ENCODE measurements at regions of chr7 and their contacts with region 1.

Region 1: DNA sequence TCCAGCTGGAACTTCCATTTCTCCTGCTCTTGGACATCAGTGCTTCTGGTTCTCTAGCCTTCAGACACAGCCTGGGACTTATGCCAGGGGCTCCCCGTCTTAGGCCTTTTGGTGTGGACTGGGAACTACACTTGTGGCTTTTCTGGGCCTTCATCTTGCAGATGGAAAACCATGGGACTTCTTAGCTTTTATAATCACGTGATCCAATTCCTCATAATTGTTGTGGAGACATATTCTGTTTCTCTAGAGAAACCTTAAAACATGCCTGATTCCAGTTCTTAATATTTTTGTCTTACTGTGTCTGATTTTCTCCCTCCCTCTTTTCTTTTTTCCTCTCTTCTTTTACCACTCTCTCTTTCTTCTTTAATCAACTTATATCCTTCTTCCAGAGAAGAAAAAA is 224.2 kb upstream of the FOXP2 start:
- DNase-seq: no peak
- ATAC-seq: no peak
- H3K4me3 Mint-ChIP-seq: no peak overlapping the region
- H3K27ac Mint-ChIP-seq: no peak overlapping the region
- H3K4me1 Mint-ChIP-seq: no peaks in the 10 kb centered on the region
- H3K27me3 Mint-ChIP-seq: peaks cover 3% of the 10 kb centered on the region

Region 2: GRCh38 chr7:113188396-113188795 is 1002.0 kb before region 1 on chr7:
- CTCF ChIA-PET with region 1: no interaction called
- POLR2A ChIA-PET with region 1: no interaction called
- intact Hi-C with region 1: loop called in 1 of 2 experiments (anchors 10 kb)
- DNase-seq: no peak
- ATAC-seq: no peak
- H3K4me3 Mint-ChIP-seq: no peak overlapping the region
- H3K27ac Mint-ChIP-seq: no peak overlapping the region
- H3K4me1 Mint-ChIP-seq: no peaks in the 10 kb centered on the region
- H3K27me3 Mint-ChIP-seq: peaks cover 9% of the 10 kb centered on the region

Measured in activated CD4-positive, alpha-beta T cell treated with anti-CD3 and anti-CD28 coated beads for 36 hours (primary cell).